ENCODE measurements at regions of chr20 and their contacts with region 1.

Region 1: DNA sequence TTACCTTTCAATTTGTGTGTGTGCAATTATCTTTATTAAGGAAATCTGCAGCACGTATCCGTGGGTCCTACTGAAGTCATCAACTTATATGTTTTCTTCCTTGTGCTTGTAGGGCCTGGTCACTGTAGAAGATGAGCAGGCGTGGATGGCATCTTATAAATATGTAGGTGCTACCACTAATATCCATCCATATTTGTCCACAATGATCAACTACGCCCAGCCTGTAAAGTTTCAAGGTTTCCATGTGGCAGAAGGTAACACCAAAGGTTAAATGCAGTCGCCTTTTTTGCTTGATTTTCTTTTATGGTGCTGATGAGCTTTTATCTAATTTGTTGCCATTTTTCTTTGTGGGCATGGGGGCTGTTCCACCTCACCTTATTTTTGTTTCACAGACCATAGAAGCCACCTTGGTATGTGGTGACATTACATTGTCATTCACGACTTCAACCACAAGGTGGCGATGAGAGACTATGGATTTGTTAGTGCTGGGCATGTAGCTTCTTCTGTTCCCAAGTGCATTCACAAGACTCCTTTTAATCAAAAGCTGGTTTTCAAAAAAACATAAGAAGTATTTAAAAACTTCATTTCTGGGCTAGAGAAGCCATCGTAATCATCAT is 106.5 kb upstream of the LAMP5 start:
- DNase-seq: peak; percentile 54
- H3K27ac ChIP-seq: no peak overlapping the region
- CTCF ChIP-seq: peak; percentile 93

Region 2: GRCh38 chr20:9359561-9360308 is 48.2 kb before region 1 on chr20:
- CTCF ChIA-PET with region 1: no interaction called
- POLR2A ChIA-PET with region 1: no interaction called
- DNase-seq: peak; percentile 31
- H3K27ac ChIP-seq: no peak overlapping the region
- CTCF ChIP-seq: peak; percentile 34

Region 3: GRCh38 chr20:9602847-9603183 is 194.9 kb after region 1 on chr20:
- CTCF ChIA-PET with region 1: interaction called, 15 read pairs
- POLR2A ChIA-PET with region 1: no interaction called
- DNase-seq: no peak
- H3K27ac ChIP-seq: no peak overlapping the region
- CTCF ChIP-seq: no peak

Region 4: GRCh38 chr20:9609887-9610502 is 202.1 kb after region 1 on chr20:
- CTCF ChIA-PET with region 1: interaction called, 35 read pairs
- POLR2A ChIA-PET with region 1: no interaction called
- DNase-seq: peak; percentile 37
- H3K27ac ChIP-seq: no peak overlapping the region
- CTCF ChIP-seq: peak; percentile 80